B cell (primary cell): ENCODE measurements at regions of chr16 and their contacts with region 1.

Region 1: GRCh38 chr16:66650707-66651473 is 45.7 kb downstream of the CMTM4 start:
- DNase-seq: peak; percentile 83
- ATAC-seq: peak; percentile 96
- H3K4me3 ChIP-seq: peak overlapping the region in 2 of 5 experiments; percentile 10 to 18
- H3K4me3 Mint-ChIP-seq: peak overlapping the region; percentile 78
- H3K27ac ChIP-seq: no peak overlapping the region
- H3K27ac Mint-ChIP-seq: peak overlapping the region; percentile 21
- H3K4me1 ChIP-seq: peaks cover 5 to 9% of the 10 kb centered on the region in 2 donors
- H3K4me1 Mint-ChIP-seq: peaks cover 8% of the 10 kb centered on the region
- H3K27me3 ChIP-seq: peaks cover 0 to 21% (median 4%) of the 10 kb centered on the region in 4 experiments
- H3K27me3 Mint-ChIP-seq: peaks cover 20% of the 10 kb centered on the region
- CTCF ChIP-seq: peak; percentile 95

Region 2: DNA sequence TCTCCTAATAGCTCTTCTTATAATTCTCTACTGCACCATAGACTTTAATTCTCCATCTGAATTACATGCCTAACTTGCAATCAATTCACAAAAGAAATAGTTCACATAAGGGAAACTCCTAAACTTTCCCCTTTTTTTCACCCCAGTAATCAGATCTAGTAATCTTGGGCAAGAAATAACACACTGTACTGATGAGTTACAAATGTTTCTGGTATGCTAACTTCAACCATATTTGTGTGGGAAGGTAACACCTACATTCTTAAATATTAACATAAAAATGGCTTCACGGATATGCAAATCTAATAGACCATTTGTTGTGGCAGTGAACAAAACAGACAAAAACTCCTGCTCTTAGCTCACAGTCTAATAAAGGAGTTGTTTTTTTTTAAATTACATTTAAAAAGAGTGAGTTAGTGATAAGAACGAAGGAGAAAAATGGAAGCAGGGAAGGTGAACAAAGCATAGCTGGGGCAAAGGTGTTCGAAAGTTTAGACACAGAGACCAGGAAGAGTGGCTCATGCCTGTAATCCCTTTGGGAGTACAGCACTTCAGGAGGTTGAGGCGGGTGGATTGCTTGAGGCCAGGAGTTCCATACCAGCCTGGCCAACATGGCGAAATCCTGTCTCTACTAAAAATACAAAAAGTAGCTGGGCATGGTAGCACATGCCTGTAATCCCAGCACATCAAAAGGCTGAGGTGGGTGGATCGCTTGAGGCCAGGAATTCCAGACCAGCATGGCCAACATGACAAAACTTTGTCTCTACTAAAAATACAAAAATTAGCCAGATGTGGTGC is 11.6 kb before region 1 on chr16:
- CTCF ChIA-PET with region 1: interaction called, 11 read pairs
- POLR2A ChIA-PET with region 1: no interaction called
- intact Hi-C with region 1: no loop called
- DNase-seq: no peak
- ATAC-seq: no peak
- H3K4me3 ChIP-seq: no peak overlapping the region
- H3K4me3 Mint-ChIP-seq: no peak overlapping the region
- H3K27ac ChIP-seq: no peak overlapping the region
- H3K27ac Mint-ChIP-seq: no peak overlapping the region
- H3K4me1 ChIP-seq: no peaks in the 10 kb centered on the region
- H3K4me1 Mint-ChIP-seq: no peaks in the 10 kb centered on the region
- H3K27me3 ChIP-seq: peaks cover 0 to 10% (median 1%) of the 10 kb centered on the region in 4 experiments
- H3K27me3 Mint-ChIP-seq: peaks cover 30% of the 10 kb centered on the region
- CTCF ChIP-seq: no peak

Region 3: GRCh38 chr16:67311607-67312488 is 661.0 kb after region 1 on chr16:
- CTCF ChIA-PET with region 1: no interaction called
- POLR2A ChIA-PET with region 1: no interaction called
- intact Hi-C with region 1: no loop called
- DNase-seq: no peak
- ATAC-seq: no peak
- H3K4me3 ChIP-seq: no peak overlapping the region
- H3K4me3 Mint-ChIP-seq: no peak overlapping the region
- H3K27ac ChIP-seq: no peak overlapping the region
- H3K27ac Mint-ChIP-seq: no peak overlapping the region
- H3K4me1 ChIP-seq: peaks cover 6 to 9% of the 10 kb centered on the region in 2 donors
- H3K4me1 Mint-ChIP-seq: peaks cover 5% of the 10 kb centered on the region
- H3K27me3 ChIP-seq: no peaks in the 10 kb centered on the region
- H3K27me3 Mint-ChIP-seq: peaks cover 6% of the 10 kb centered on the region
- CTCF ChIP-seq: no peak